Endothelial cell of umbilical vein (primary cell): ENCODE measurements at regions of chr10 and their contacts with region 1.

Region 1: GRCh38 chr10:120735773-120736371 is 115.3 kb upstream of the WDR11 start:
- DNase-seq: peak; percentile 60
- H3K4me3 ChIP-seq: no peak overlapping the region
- H3K27ac ChIP-seq: peak overlapping the region; percentile 81
- H3K4me1 ChIP-seq: peaks cover 39% of the 10 kb centered on the region
- H3K27me3 ChIP-seq: no peaks in the 10 kb centered on the region
- CTCF ChIP-seq: peak; percentile 50 to 53
- POLR2A ChIP-seq: no peak

Region 2: GRCh38 chr10:120423431-120424197 is 312.3 kb before region 1 on chr10:
- CTCF ChIA-PET with region 1: interaction called, 45 read pairs
- POLR2A ChIA-PET with region 1: interaction called, 4 read pairs
- dilution Hi-C with region 1: no loop called
- intact Hi-C with region 1: loop called (anchors 1 kb)
- DNase-seq: peak; percentile 86
- H3K4me3 ChIP-seq: no peak overlapping the region
- H3K27ac ChIP-seq: peak overlapping the region; percentile 86
- H3K4me1 ChIP-seq: peaks cover 50% of the 10 kb centered on the region
- H3K27me3 ChIP-seq: no peaks in the 10 kb centered on the region
- CTCF ChIP-seq: peak; percentile 91 to 97
- POLR2A ChIP-seq: no peak

Region 3: GRCh38 chr10:120600871-120601649 is 134.8 kb before region 1 on chr10:
- CTCF ChIA-PET with region 1: interaction called, 20 read pairs
- POLR2A ChIA-PET with region 1: interaction called, 3 read pairs
- dilution Hi-C with region 1: no loop called
- intact Hi-C with region 1: no loop called
- DNase-seq: peak; percentile 47
- H3K4me3 ChIP-seq: no peak overlapping the region
- H3K27ac ChIP-seq: no peak overlapping the region
- H3K4me1 ChIP-seq: peaks cover 5% of the 10 kb centered on the region
- H3K27me3 ChIP-seq: no peaks in the 10 kb centered on the region
- CTCF ChIP-seq: peak; percentile 51 to 71
- POLR2A ChIP-seq: no peak

Region 4: DNA sequence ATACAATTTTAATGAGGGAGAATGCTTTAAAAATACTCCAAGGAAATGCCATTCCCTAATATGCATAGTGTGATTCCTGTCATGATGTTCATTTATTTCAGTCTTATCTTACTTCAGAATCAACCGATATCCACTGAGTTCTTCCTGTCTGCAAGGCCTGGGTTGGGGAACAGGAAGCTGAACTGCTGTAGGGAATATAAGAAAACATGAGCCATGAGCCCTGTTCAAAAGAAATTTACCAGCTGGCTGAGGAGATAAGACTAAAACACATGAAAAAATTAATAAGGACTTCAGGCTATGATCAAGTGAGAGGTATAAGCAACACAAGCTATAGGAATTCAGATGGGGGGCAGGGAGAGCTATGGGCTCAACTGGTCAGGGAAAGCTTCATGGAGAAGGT is 94.2 kb before region 1 on chr10:
- CTCF ChIA-PET with region 1: interaction called, 13 read pairs
- POLR2A ChIA-PET with region 1: interaction called, 8 read pairs
- dilution Hi-C with region 1: no loop called
- intact Hi-C with region 1: loop called (anchors 1 kb)
- DNase-seq: peak; percentile 97
- H3K4me3 ChIP-seq: no peak overlapping the region
- H3K27ac ChIP-seq: peak overlapping the region; percentile 81
- H3K4me1 ChIP-seq: peaks cover 33% of the 10 kb centered on the region
- H3K27me3 ChIP-seq: no peaks in the 10 kb centered on the region
- CTCF ChIP-seq: no peak
- POLR2A ChIP-seq: peak; percentile 88

Region 5: DNA sequence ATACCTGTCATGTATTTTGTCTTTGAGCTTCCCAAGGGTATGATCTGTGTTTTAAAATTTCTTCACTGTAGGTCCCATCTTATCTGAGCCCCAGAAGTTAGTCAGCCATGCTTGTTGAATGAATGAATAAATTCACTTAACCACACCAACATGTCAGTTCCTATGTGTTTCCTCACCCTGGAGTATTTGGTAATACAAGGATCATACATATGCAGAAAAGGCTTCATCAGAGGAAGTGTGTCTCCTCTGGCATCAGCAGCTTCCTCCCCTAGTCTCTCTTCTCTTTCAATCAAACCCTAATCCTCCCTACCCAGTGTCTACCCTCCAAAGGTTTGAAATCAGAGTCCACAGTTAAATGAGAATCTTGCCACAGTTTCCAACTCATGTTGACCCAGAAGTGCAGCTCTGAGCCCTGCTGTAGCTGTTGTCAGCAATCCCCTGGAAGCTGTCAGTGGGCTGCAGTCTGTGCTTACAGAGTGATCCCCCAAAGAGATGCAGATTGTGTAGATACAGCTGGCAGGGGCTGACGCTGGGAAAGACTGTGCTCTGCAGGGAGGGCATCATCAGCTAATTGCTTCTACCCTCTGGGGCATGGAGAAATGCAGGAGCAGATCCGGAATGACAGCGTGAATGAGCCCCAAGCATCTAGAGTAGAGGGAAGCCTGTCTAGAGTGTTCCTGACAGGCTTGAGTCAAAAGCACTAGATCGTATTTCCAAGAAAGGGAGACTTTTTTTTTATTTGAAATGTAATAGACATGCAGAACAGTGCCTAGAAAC is 10.3 kb after region 1 on chr10:
- CTCF ChIA-PET with region 1: interaction called, 12 read pairs
- POLR2A ChIA-PET with region 1: no interaction called
- dilution Hi-C with region 1: no loop called
- intact Hi-C with region 1: no loop called
- DNase-seq: no peak
- H3K4me3 ChIP-seq: no peak overlapping the region
- H3K27ac ChIP-seq: no peak overlapping the region
- H3K4me1 ChIP-seq: no peaks in the 10 kb centered on the region
- H3K27me3 ChIP-seq: no peaks in the 10 kb centered on the region
- CTCF ChIP-seq: no peak
- POLR2A ChIP-seq: no peak

Region 6: DNA sequence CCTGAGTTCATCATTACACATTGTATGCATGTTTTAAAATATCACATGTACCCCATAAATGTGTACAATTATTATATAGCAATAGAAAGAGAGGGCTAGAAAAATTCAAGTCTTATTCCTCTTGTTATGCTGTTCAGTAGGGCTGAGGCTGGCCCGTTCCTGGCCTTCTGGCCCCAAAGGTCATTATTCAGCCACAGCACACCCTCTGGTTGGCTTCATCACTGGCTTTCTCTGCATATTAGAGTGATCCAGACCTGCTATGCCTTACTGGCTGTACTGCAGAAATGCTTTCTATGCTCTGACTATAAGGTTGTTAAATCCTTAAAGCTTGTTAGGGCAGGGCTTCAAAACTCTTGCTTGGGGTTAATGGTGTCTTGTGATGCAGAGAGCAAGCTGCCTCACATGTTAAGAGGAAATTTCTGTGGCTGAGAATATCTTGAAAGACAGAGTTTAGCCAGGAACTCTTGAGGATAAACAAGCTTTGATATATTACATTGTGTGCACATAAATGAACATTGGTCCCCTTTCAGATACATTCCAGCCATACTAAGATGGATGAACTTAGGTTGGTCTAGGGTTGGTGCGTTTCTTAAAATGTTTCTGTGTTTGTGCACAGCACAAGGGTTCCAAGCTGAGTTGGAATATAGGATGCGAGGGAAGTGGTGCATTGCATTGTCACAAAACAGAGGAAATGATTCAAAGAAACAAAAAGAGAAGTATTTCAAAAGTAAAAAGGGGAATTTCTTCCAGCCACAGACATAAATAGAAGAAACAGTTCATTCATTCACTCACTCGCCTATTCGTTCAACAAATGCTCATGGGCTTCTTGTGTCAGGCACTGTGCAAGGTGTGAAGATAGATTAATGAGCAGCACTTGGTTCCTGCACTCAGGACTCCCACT is 53.7 kb after region 1 on chr10:
- CTCF ChIA-PET with region 1: no interaction called
- POLR2A ChIA-PET with region 1: no interaction called
- dilution Hi-C with region 1: no loop called
- intact Hi-C with region 1: no loop called
- DNase-seq: no peak
- H3K4me3 ChIP-seq: no peak overlapping the region
- H3K27ac ChIP-seq: no peak overlapping the region
- H3K4me1 ChIP-seq: peaks cover 3% of the 10 kb centered on the region
- H3K27me3 ChIP-seq: no peaks in the 10 kb centered on the region
- CTCF ChIP-seq: no peak
- POLR2A ChIP-seq: no peak